ENCODE measurements at regions of chr15 and their contacts with region 1.

Region 1: GRCh38 chr15:99275525-99276128 is 24.3 kb downstream of the LRRC28 start:
- DNase-seq: no peak
- ATAC-seq: no peak
- H3K4me3 ChIP-seq: no peak overlapping the region
- H3K27ac ChIP-seq: no peak overlapping the region
- H3K4me1 ChIP-seq: no peaks in the 10 kb centered on the region
- CTCF ChIP-seq: no peak
- EP300 ChIP-seq: no peak
- POLR2A ChIP-seq: no peak
- RAD21 ChIP-seq: no peak

Region 2: DNA sequence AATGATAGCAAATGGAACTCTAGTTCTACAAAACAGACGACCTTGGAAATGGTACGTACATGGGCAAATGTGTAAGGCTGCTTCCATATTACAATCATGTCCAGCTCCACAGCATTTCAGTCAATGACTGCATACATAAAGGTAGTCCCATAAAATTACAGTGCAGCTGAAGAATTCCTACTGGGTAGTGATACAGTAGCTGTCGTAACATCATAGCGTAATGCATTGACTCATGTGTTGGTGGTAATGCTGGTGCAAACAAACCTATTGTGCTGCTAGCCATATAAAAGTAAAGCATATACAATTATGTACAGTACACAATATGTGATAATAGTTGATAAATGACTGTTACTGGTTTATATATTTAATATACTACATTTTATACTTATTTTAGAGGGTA is 44.8 kb before region 1 on chr15:
- CTCF ChIA-PET with region 1: no interaction called
- POLR2A ChIA-PET with region 1: no interaction called
- DNase-seq: no peak
- ATAC-seq: no peak
- H3K4me3 ChIP-seq: no peak overlapping the region
- H3K27ac ChIP-seq: no peak overlapping the region
- H3K4me1 ChIP-seq: no peaks in the 10 kb centered on the region
- CTCF ChIP-seq: no peak
- EP300 ChIP-seq: no peak
- POLR2A ChIP-seq: no peak
- RAD21 ChIP-seq: no peak

Region 3: GRCh38 chr15:99257107-99257750 is 18.4 kb before region 1 on chr15:
- CTCF ChIA-PET with region 1: interaction called, 45 read pairs
- POLR2A ChIA-PET with region 1: no interaction called
- DNase-seq: no peak
- ATAC-seq: no peak
- H3K4me3 ChIP-seq: no peak overlapping the region
- H3K27ac ChIP-seq: no peak overlapping the region
- H3K4me1 ChIP-seq: peaks cover 4% of the 10 kb centered on the region; the same call in 2 of the 3 replicates
- CTCF ChIP-seq: no peak
- EP300 ChIP-seq: no peak
- POLR2A ChIP-seq: no peak
- RAD21 ChIP-seq: no peak

Region 4: DNA sequence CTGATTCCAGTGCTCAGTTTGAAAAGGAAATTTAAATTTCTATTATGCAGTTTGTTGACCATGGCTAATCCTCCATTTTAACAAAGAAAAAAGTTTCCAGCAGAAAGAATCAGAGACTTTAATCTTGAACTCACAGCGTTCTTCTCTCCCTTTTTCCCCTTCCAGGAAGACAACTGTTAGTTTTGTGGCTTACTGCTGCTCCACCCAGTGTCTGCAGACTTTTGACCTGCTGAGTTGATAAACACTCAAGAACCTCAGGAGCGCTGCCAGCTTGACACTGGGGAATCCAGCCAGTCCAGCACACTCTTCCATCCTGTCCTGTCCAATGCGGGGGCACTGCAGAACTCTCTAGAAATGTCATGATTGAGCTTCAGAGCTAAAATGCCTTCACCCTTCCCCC is 110.2 kb after region 1 on chr15:
- CTCF ChIA-PET with region 1: interaction called, 10 read pairs
- POLR2A ChIA-PET with region 1: no interaction called
- DNase-seq: peak in 1 of 2 experiments; percentile 58
- ATAC-seq: peak; percentile 68 to 87; a peak in 4 of 6 replicates
- H3K4me3 ChIP-seq: no peak overlapping the region
- H3K27ac ChIP-seq: peak overlapping the region; percentile 1 to 67; a peak in 4 of 6 replicates
- H3K4me1 ChIP-seq: peaks cover 22% of the 10 kb centered on the region
- CTCF ChIP-seq: no peak
- EP300 ChIP-seq: no peak
- POLR2A ChIP-seq: no peak
- RAD21 ChIP-seq: peak; percentile 12 to 37; a peak in 2 of 5 replicates

Region 5: GRCh38 chr15:99719096-99719541 is 443.5 kb after region 1 on chr15:
- CTCF ChIA-PET with region 1: interaction called, 72 read pairs
- POLR2A ChIA-PET with region 1: no interaction called
- DNase-seq: no peak
- ATAC-seq: no peak
- H3K4me3 ChIP-seq: no peak overlapping the region
- H3K27ac ChIP-seq: no peak overlapping the region
- H3K4me1 ChIP-seq: no peaks in the 10 kb centered on the region
- CTCF ChIP-seq: no peak
- EP300 ChIP-seq: no peak
- POLR2A ChIP-seq: no peak
- RAD21 ChIP-seq: no peak

Measured in A549 (cell line).